ENCODE measurements at regions of chr12 and their contacts with region 1.

Region 1: GRCh38 chr12:118135788-118136558 is at the start of gene PEBP1:
- DNase-seq: peak; percentile 85 to 94 (median 89)
- ATAC-seq: peak; percentile 100
- H3K4me3 ChIP-seq: peak within 1 kb of the TSS; percentile 76
- H3K4me3 Mint-ChIP-seq: peak within 1 kb of the TSS; percentile 86 to 99 (median 97)
- H3K27ac ChIP-seq: peak within 1 kb of the TSS; percentile 83
- H3K27ac Mint-ChIP-seq: peak within 1 kb of the TSS; percentile 84 to 96 (median 91)
- H3K4me1 ChIP-seq: peaks cover 6 to 17% of the 10 kb centered on the region in 2 donors
- H3K4me1 Mint-ChIP-seq: peaks cover 7 to 46% (median 37%) of the 10 kb centered on the region in 7 donors
- H3K27me3 ChIP-seq: no peaks in the 10 kb centered on the region
- H3K27me3 Mint-ChIP-seq: no peaks in the 10 kb centered on the region
- total RNA-seq, gene PEBP1: 73.8 to 109 (median 91.1) TPM

Region 2: DNA sequence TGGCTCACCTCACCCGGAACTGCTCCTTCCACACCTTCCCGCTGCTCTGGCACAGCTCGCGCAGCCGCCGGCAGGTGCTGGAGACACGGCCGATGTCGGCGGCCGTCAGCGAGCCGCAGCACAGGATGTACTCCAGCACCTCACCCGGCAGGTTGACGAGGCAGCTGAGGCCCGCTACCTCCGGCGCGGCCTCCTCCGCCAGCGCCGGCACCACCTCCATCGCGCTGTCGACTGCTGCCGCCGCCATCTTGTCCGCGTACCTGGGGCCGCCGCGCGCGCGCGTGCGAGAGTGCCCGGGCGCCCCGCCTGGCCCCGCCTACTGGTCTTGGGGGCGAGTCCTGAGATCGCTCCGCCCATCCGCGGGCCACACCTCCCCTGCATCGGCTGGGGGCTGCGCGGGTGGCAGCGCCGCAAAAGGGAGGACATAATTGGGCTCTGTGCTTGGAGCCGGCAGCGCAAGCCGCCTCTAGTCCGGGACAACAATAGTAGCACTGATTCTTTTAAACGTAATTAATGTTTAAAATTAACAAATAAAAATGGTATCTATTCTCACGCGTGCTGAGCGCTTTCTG is 945.7 kb before region 1 on chr12 and contains the start of gene FBXO21:
- CTCF ChIA-PET with region 1: no interaction called
- POLR2A ChIA-PET with region 1: no interaction called
- intact Hi-C with region 1: loop called in 1 of 2 experiments (anchors 5 kb)
- DNase-seq: peak; percentile 92 to 98 (median 95)
- ATAC-seq: peak; percentile 99
- H3K4me3 ChIP-seq: peak within 1 kb of the TSS; percentile 65
- H3K4me3 Mint-ChIP-seq: peak within 1 kb of the TSS; percentile 93 to 97 (median 95)
- H3K27ac ChIP-seq: peak within 1 kb of the TSS; percentile 77
- H3K27ac Mint-ChIP-seq: peak within 1 kb of the TSS; percentile 85 to 95 (median 93)
- H3K4me1 ChIP-seq: peaks cover 8 to 11% of the 10 kb centered on the region in 2 donors
- H3K4me1 Mint-ChIP-seq: peaks cover 13 to 52% (median 34%) of the 10 kb centered on the region in 7 donors
- H3K27me3 ChIP-seq: no peaks in the 10 kb centered on the region
- H3K27me3 Mint-ChIP-seq: peaks cover 0 to 12% (median 0%) of the 10 kb centered on the region in 5 donors
- total RNA-seq, gene FBXO21: 30.4 to 62.9 (median 48.6) TPM

Region 3: GRCh38 chr12:118016424-118017264 is 119.3 kb before region 1 on chr12 and contains the start of gene RFC5:
- CTCF ChIA-PET with region 1: no interaction called
- POLR2A ChIA-PET with region 1: no interaction called
- intact Hi-C with region 1: loop called (anchors 1 kb)
- DNase-seq: peak; percentile 93 to 98 (median 97)
- ATAC-seq: peak; percentile 99
- H3K4me3 ChIP-seq: peak within 1 kb of the TSS; percentile 80
- H3K4me3 Mint-ChIP-seq: peak within 1 kb of the TSS; percentile 89 to 95 (median 92)
- H3K27ac ChIP-seq: peak within 1 kb of the TSS; percentile 69
- H3K27ac Mint-ChIP-seq: peak within 1 kb of the TSS; percentile 82 to 95 (median 92)
- H3K4me1 ChIP-seq: peaks cover 10 to 13% of the 10 kb centered on the region in 2 donors
- H3K4me1 Mint-ChIP-seq: peaks cover 11 to 29% (median 18%) of the 10 kb centered on the region in 7 donors
- H3K27me3 ChIP-seq: no peaks in the 10 kb centered on the region
- H3K27me3 Mint-ChIP-seq: peaks cover 0 to 7% (median 0%) of the 10 kb centered on the region in 5 donors
- total RNA-seq, gene RFC5: 6.3 to 40.3 (median 15.6) TPM

Region 4: DNA sequence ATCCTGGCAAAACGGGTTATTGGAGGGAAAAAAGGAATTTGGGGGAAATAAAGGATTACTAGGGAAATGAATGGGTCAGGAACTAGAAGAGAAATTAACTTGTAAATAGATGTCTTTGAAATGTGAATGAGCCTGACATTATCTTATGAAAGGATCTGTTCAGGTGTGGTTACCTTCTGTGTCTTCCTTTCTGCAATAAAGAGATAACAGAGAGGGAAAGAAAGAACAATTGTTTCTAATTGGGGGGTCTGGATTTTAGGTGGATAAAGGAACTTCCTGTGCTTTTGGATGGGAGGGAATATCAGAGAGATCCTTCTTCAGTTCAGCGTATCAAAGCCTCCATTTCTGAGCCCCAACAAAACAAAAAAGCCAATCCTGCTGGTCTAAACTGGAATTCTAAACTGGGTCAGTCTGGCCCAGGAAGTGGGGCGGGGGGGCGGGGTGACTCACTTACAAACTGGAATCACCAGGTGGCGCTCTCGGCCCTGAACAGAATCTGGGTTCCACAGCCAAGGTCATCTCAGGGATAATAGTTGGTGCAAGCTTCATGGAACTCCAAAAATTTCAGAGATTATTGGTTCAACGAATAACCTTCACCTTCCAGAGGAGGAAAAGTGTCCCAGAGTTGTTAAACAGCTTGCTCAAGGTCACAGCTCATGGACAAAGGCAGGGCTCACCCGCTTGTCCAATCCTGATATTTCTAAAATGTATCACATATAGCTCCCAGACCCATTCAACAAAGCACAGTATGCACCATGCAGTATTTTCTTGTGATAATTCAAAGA is 15.2 kb before region 1 on chr12:
- CTCF ChIA-PET with region 1: interaction called, 3 read pairs
- POLR2A ChIA-PET with region 1: no interaction called
- intact Hi-C with region 1: loop called (anchors 1 kb)
- DNase-seq: peak in 8 of 9 donors; percentile 12 to 50 (median 34)
- ATAC-seq: peak; percentile 76
- H3K4me3 ChIP-seq: no peak overlapping the region
- H3K4me3 Mint-ChIP-seq: no peak overlapping the region
- H3K27ac ChIP-seq: no peak overlapping the region
- H3K27ac Mint-ChIP-seq: peak overlapping the region in 7 of 9 donors; percentile 51 to 71 (median 62)
- H3K4me1 ChIP-seq: peaks cover 0 to 3% of the 10 kb centered on the region in 2 donors
- H3K4me1 Mint-ChIP-seq: peaks cover 4 to 12% (median 8%) of the 10 kb centered on the region in 7 donors
- H3K27me3 ChIP-seq: no peaks in the 10 kb centered on the region
- H3K27me3 Mint-ChIP-seq: no peaks in the 10 kb centered on the region

Measured in naive thymus-derived CD4-positive, alpha-beta T cell (primary cell).